Heart left ventricle (tissue), 16 donors: ENCODE measurements at regions of chr12 and their contacts with region 1.

Region 1: GRCh38 chr12:109047081-109047805 is 5.1 kb upstream of the USP30 start:
- DNase-seq: no peak
- ATAC-seq: no peak
- H3K4me3 ChIP-seq: no peak overlapping the region
- H3K27ac ChIP-seq: no peak overlapping the region
- H3K4me1 ChIP-seq: peaks cover 0 to 6% (median 5%) of the 10 kb centered on the region in 12 donors
- H3K27me3 ChIP-seq: peaks cover 0 to 6% (median 0%) of the 10 kb centered on the region in 9 donors
- CTCF ChIP-seq: no peak
- POLR2A ChIP-seq: no peak

Region 2: DNA sequence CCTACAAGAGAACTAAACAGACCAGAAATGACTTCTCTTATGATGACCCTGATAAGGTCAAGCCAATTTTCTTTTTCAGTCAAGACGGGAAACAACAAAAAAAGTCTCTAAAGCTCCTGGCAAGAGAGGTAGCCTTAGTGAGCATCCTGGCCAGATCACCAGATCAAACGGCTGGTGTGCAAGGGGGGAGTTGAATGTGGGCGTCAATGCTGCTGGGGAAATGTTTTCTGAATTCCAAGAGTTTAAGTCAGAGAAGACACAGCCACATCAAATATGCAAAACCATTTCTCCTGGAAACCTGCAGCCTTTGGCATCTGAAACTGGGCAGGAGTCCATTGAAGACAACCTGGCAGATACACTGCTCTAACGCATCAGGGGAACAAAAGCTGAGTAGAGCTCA is 397.6 kb before region 1 on chr12:
- intact Hi-C with region 1: no loop called
- DNase-seq: no peak
- ATAC-seq: no peak
- H3K4me3 ChIP-seq: no peak overlapping the region
- H3K27ac ChIP-seq: peak overlapping the region in 6 of 12 donors; percentile 4 to 33 (median 18)
- H3K4me1 ChIP-seq: peaks cover under 1 to 68% (median 33%) of the 10 kb centered on the region in 12 donors
- H3K27me3 ChIP-seq: no peaks in the 10 kb centered on the region
- CTCF ChIP-seq: no peak
- POLR2A ChIP-seq: no peak

Region 3: DNA sequence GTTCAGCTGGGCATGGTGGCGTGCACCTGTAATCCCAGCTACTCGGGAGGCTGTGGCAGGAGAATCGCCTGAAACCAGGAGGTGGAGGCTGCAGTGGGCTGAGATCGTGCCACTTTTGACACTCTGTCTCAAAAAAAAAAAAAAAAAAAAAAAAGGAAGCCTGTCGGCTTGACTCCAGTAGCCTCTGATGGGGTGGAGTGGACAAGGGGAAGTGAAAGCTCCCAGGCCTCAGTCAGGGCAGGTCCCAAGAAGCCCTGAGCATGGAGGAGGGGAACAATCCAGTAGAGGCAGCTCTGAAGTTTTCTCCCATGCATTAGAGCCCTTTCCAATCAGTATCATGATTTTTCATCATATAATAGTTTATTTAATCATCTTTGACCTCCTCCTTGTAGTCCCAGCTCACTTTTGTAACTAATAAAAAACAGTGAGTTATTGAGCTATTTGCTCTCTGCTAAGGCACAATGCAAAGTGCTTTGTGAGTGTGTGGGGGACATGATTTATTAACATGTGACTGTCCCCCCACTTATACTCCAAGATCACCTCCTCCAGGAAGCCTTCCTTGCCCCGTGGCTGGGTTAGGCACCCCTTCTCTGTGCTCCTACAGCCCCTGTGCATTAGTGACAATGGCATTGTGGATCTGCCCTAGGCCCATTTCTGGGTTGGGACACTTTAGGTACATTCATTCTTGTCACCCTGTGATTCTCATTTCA is 185.2 kb before region 1 on chr12:
- intact Hi-C with region 1: loop called in 1 of 10 experiments (anchors 10 kb)
- DNase-seq: peak in 3 of 5 donors; percentile 61 to 68 (median 66)
- ATAC-seq: peak in 1 of 4 donors; percentile 38
- H3K4me3 ChIP-seq: no peak overlapping the region
- H3K27ac ChIP-seq: peak overlapping the region in 3 of 12 donors; percentile 31 to 69 (median 43)
- H3K4me1 ChIP-seq: peaks cover 0 to 42% (median 12%) of the 10 kb centered on the region in 12 donors
- H3K27me3 ChIP-seq: no peaks in the 10 kb centered on the region
- CTCF ChIP-seq: no peak
- POLR2A ChIP-seq: no peak

Region 4: GRCh38 chr12:108980831-108981618 is 66.2 kb before region 1 on chr12:
- intact Hi-C with region 1: no loop called
- DNase-seq: peak in 4 of 5 donors; percentile 34 to 81 (median 64)
- ATAC-seq: peak; percentile 91 to 94 (median 92)
- H3K4me3 ChIP-seq: no peak overlapping the region
- H3K27ac ChIP-seq: peak overlapping the region in 2 of 12 donors; percentile 19 to 65
- H3K4me1 ChIP-seq: peaks cover 0 to 7% (median 0%) of the 10 kb centered on the region in 12 donors
- H3K27me3 ChIP-seq: no peaks in the 10 kb centered on the region
- CTCF ChIP-seq: no peak
- POLR2A ChIP-seq: no peak

Region 5: DNA sequence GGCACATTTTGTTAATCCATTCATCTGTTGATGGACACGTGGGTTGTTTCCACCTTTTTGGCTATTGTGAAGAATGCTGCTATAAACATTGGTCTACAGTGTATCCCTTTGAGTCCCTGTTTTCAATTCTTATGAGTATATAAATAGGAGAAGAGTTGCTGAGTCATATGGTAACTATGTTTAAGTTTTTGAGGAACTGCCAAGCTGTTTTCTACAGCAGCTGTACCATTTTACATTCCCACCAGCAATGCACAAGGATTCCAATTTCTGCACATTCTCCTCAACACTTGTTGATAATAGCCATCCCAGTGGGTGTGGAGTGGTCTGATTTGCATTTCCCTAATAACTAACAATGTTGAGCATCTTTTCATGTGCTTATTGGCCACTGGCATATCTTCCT is 19.5 kb before region 1 on chr12:
- intact Hi-C with region 1: no loop called
- DNase-seq: no peak
- ATAC-seq: no peak
- H3K4me3 ChIP-seq: no peak overlapping the region
- H3K27ac ChIP-seq: no peak overlapping the region
- H3K4me1 ChIP-seq: peaks cover 0 to 5% (median 0%) of the 10 kb centered on the region in 12 donors
- H3K27me3 ChIP-seq: no peaks in the 10 kb centered on the region
- CTCF ChIP-seq: no peak
- POLR2A ChIP-seq: no peak

Region 6: DNA sequence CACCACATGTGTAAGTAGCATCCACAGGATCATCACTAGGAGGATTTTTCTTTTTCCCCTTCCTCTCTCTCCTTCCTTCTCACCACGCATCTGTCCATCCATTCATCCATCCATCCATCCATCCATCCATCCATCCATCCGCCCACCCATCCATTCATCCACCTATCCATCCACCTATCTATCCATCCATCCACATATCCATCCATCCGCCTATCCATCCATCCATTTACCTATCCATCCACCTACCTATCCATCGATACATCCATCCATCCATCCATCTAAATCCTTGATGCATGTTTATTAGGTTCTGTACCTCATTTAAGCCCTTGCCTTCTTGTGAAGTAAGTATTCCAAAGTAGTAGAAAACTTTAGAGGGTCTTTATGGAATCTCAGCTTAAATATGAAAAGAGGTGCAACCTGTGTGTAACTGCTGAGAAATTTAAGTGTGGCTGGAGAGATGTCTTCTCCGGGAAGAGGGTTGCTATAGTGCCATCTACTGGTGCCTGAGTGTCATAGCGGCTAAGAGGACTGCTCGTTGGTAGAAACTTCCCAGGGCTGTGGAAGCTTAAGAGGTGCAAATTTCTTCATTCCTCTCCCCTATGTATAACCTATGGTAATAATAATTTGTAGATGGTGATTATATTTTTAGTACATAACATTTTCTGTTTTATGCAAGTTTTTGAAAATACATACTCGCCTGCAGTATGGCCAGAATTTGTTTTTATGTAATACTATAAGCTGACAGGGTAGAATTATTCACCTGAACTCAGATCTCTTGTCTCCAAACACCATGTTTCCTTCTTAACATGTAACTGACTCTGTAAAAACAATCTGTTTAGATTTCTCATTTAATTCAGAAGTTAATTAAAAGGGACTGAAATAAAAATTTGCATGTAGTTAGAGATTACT is 346.4 kb after region 1 on chr12:
- intact Hi-C with region 1: no loop called
- DNase-seq: peak in 1 of 5 donors; percentile 39
- ATAC-seq: peak; percentile 42 to 73 (median 53)
- H3K4me3 ChIP-seq: no peak overlapping the region
- H3K27ac ChIP-seq: no peak overlapping the region
- H3K4me1 ChIP-seq: no peaks in the 10 kb centered on the region
- H3K27me3 ChIP-seq: no peaks in the 10 kb centered on the region
- CTCF ChIP-seq: peak; percentile 78 to 95 (median 85)
- POLR2A ChIP-seq: no peak

Region 7: DNA sequence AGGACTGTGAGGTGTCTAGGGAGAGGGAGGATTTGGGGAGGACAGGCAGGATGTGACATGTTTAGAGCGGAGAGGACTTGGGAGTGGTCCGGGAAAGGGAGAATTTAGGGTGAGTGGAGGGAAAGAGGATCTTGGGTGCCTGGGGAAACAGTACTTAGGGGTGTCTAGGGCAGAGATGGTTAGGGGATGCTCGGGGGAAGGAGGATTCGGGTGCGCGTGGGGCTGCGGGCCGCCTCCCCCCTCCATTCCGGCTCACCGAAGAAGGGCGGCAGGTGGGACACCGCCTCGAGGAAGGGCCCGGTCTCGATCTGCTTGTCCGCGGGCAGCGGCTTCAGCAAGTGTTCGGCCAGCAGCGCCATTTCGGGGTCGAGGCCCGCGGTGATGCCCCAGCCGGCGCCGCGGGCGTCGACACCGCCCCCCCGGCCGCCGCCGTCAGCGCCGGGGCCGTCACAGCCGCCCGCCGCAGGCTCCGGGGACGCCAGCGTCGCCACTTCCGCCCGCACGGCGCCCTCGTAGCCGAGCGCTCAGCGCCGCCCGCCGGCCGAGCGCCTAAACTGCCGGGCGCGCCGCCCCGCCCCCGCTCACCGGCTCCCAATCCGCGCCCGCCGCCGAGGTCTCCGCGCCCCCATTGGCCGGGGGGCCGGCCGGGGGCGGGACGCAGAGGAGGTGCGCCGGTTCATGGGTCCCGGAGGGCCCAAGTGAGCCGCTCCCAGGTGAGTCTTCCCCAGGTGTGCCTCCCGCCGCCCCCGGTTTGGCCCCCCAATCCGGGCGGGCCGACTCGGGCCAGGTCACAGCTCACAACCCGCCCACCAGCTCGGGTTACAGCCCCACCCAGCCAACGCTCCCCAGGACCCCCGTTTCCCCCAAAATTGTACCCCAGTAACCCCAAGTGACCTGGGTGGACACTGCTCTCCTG is 833.0 kb after region 1 on chr12 and contains the start of gene GLTP:
- intact Hi-C with region 1: loop called in 1 of 10 experiments (anchors 10 kb)
- DNase-seq: peak; percentile 89 to 94 (median 89)
- ATAC-seq: peak; percentile 88 to 98 (median 96)
- H3K4me3 ChIP-seq: peak within 1 kb of the TSS; percentile 60 to 93 (median 80)
- H3K27ac ChIP-seq: peak within 1 kb of the TSS in 11 of 12 donors; percentile 54 to 87 (median 77)
- H3K4me1 ChIP-seq: peaks cover 0 to 35% (median 16%) of the 10 kb centered on the region in 12 donors
- H3K27me3 ChIP-seq: no peaks in the 10 kb centered on the region
- CTCF ChIP-seq: peak in 11 of 12 donors; percentile 13 to 88 (median 68)
- POLR2A ChIP-seq: peak in 1 of 2 donors; percentile 52
- total RNA-seq, gene GLTP: 18.0 to 68.6 (median 25.1) TPM